ENCODE measurements at regions of chr6 and their contacts with region 1.

Region 1: GRCh38 chr6:137927777-137928218 is 60.7 kb downstream of the TNFAIP3 start:
- DNase-seq: no peak
- ATAC-seq: no peak; the same call in 1 of the 2 replicates
- H3K4me3 ChIP-seq: no peak overlapping the region
- H3K27ac ChIP-seq: no peak overlapping the region
- H3K4me1 ChIP-seq: peaks cover 5 to 28% of the 10 kb centered on the region in 2 experiments; a peak in 2 of 4 replicates
- H3K27me3 ChIP-seq: no peaks in the 10 kb centered on the region
- CTCF ChIP-seq: no peak
- POLR2A ChIP-seq: no peak
- RAD21 ChIP-seq: no peak

Region 2: GRCh38 chr6:137560184-137560563 is 367.6 kb before region 1 on chr6:
- CTCF ChIA-PET with region 1: no interaction called
- POLR2A ChIA-PET with region 1: no interaction called
- RAD21 ChIA-PET with region 1: no interaction called
- intact Hi-C with region 1: no loop called
- DNase-seq: no peak
- ATAC-seq: no peak
- H3K4me3 ChIP-seq: no peak overlapping the region
- H3K27ac ChIP-seq: no peak overlapping the region
- H3K4me1 ChIP-seq: no peaks in the 10 kb centered on the region
- H3K27me3 ChIP-seq: no peaks in the 10 kb centered on the region
- CTCF ChIP-seq: no peak
- POLR2A ChIP-seq: no peak
- RAD21 ChIP-seq: no peak

Region 3: DNA sequence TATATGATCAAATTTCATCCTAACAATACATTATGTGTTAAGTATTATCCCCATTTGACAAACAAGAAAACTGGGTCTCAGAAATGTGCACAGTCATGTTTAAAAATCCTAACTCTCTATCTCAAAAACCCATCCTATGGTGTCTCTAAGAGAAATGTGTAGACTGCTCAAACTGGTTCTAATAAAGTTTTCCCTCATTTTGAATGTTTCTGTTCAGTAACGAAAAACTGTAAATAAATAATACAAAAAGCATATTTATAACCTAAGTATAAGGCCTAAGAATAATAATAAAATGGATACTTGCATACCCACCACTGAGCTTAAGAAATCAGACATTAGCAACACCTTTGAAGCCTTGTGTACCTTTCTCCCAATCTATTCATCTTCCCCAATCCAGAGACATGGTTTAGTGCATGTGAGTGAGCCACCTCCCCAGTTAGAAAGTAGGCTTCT is 21.8 kb before region 1 on chr6:
- CTCF ChIA-PET with region 1: no interaction called
- POLR2A ChIA-PET with region 1: no interaction called
- RAD21 ChIA-PET with region 1: no interaction called
- intact Hi-C with region 1: loop called (anchors 2 kb)
- DNase-seq: no peak
- ATAC-seq: no peak
- H3K4me3 ChIP-seq: no peak overlapping the region
- H3K27ac ChIP-seq: no peak overlapping the region
- H3K4me1 ChIP-seq: no peaks in the 10 kb centered on the region
- H3K27me3 ChIP-seq: no peaks in the 10 kb centered on the region
- CTCF ChIP-seq: no peak
- POLR2A ChIP-seq: no peak
- RAD21 ChIP-seq: no peak

Measured in HCT116 (cell line).